Astrocyte of the cerebellum (primary cell): ENCODE measurements at regions of chr2 and their contacts with region 1.

Region 1: DNA sequence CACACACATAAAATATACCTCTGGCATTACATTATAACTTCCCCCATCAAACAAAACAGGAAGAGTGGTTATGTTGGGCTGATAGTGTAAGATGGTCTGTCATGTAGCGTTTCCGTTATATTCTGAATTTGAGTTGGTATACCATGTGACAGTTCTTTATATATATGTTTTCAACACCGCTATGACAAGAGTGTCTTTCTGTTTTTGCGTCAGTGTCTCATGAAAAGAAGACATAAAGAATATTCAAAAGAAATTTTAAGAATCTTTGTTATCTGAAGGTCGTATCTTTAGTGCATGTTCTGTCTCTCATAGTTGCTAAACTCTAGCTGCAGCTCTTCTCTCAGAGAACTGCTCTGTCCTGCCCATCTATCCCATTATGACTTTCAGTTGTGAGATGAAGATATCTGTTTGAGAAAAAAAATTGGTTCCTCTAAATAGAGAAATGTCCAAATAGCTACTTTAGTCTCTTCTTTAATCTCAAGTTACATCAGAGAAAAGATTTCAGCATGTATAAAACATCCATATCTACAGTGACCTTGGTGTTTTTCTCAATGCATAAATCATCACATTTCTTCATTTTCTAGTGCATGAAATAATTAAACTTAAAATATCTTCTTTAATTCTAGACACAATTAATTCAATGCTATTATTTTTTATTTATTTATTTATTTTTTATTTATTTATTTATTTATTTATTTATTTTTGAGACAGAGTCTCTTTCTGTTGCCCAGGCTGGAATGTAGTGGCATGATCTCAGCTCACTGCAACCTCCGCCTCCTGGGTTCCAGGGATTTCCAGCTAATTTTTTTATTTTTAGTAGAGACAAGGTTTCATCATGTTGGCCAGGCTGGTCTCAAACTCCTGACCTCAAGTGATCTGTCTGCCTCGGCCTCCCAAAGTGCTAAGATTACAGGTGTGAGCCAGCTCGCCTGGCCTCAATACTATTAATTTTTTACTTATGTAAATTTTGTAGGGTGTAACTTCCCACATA is 24.3 kb upstream of the PSME4 start:
- DNase-seq: no peak
- H3K4me3 ChIP-seq: no peak overlapping the region
- CTCF ChIP-seq: no peak

Region 2: GRCh38 chr2:53903011-53903410 is 92.1 kb before region 1 on chr2:
- in situ Hi-C with region 1: no loop called
- DNase-seq: no peak
- H3K4me3 ChIP-seq: no peak overlapping the region
- CTCF ChIP-seq: no peak

Region 3: GRCh38 chr2:54038835-54039234 is 43.7 kb after region 1 on chr2:
- in situ Hi-C with region 1: loop called (anchors 5 kb)
- DNase-seq: no peak
- H3K4me3 ChIP-seq: no peak overlapping the region
- CTCF ChIP-seq: no peak